WTC11 (cell line): ENCODE measurements at regions of chr3 and their contacts with region 1.

Region 1: DNA sequence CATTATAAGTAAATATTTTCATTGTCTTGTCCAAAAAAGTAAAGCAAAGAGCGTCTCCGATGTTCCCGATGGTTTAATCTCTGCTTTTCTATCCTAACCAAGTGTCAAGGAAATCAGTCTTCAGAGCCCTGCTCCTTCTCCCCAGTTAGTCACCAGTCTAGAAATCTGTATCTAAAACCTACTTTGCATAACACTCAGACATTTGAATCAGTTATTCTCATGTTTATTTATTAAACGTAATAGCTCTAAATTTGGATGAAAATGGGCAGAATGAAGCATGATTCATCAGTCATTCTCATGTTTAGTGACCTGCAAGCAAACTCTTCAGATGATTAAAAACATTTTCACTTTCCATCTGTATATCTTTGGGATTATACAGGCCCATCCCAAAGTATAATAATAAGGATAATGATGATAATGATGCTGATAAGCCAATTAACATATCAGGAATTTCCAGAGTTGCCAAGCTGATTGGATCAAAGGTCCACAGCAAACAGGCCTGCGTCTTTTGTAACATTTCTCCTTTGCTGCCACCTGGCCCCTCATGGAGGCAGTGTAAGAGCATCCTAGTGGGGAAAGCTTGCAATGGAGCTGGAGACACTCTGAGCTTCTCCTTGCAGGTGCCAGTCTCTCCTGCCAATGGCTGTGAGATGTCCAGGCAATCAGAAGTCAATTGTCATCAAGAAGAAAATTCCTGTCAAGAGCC is 273.9 kb downstream of the IGSF11 start:
- DNase-seq: peak; percentile 30
- ATAC-seq: peak; percentile 96
- H3K4me3 Mint-ChIP-seq: no peak overlapping the region
- H3K27ac Mint-ChIP-seq: peak overlapping the region; percentile 58; the same call in 1 of the 2 replicates
- H3K4me1 Mint-ChIP-seq: peaks cover 29% of the 10 kb centered on the region
- H3K27me3 Mint-ChIP-seq: no peaks in the 10 kb centered on the region
- CTCF ChIP-seq: no peak

Region 2: DNA sequence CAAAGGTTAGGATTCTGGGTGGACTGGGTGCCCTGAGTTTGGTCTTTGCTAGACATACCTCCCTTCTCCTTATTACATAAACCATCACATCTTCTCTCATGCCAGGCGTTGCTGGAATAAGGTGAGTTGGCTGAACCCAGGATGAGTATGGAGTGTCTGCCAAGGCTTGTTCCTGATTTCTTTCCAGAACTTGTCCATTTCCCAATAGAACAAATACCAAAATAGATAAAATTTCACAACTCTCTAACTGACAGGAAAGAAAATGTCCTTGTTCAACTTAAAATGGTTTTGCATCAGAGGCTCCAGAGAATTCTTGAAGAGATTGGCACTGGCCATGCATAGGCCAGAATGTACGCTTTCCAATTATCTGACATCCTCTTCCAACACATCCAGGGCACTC is 18.0 kb before region 1 on chr3:
- CTCF ChIA-PET with region 1: no interaction called
- POLR2A ChIA-PET with region 1: no interaction called
- DNase-seq: no peak
- ATAC-seq: no peak
- H3K4me3 Mint-ChIP-seq: no peak overlapping the region
- H3K27ac Mint-ChIP-seq: no peak overlapping the region
- H3K4me1 Mint-ChIP-seq: no peaks in the 10 kb centered on the region
- H3K27me3 Mint-ChIP-seq: no peaks in the 10 kb centered on the region
- CTCF ChIP-seq: no peak

Region 3: DNA sequence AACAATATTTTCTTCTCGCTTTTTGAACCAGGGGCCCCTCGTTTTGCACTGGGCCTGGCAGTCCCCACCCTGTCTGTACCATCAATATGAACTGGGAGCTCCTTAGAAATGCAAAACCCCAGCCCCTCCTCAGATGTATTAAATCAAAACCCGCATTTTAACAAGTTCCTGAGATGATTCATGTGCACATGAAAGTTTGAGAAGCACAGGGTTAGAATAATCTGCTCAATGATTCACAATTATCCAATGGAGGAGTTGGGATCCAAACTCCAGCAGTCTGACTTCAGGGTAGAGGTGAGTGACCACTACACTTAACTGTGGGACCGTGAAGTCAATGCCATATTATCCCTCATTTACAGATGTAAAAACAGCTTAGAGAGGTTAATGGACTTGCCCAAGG is 17.5 kb after region 1 on chr3:
- CTCF ChIA-PET with region 1: interaction called, 10 read pairs
- POLR2A ChIA-PET with region 1: no interaction called
- DNase-seq: no peak
- ATAC-seq: no peak
- H3K4me3 Mint-ChIP-seq: no peak overlapping the region
- H3K27ac Mint-ChIP-seq: no peak overlapping the region
- H3K4me1 Mint-ChIP-seq: peaks cover 21% of the 10 kb centered on the region
- H3K27me3 Mint-ChIP-seq: no peaks in the 10 kb centered on the region
- CTCF ChIP-seq: no peak